Activated T-helper 1 cell treated with anti-CD3 and anti-CD28 coated beads, Interleukin-12 subunit alpha, Interleukin-12 subunit beta, Interleukin-2, Interleukin-4 antibody, amounts not matched to agents 30 ng/mL and 10 ng/mL and 1 ng/mL, durations not matched to agents 14 hours and 24 hours and 36 hours (primary cell): ENCODE measurements at regions of chr3 and their contacts with region 1.

Region 1: DNA sequence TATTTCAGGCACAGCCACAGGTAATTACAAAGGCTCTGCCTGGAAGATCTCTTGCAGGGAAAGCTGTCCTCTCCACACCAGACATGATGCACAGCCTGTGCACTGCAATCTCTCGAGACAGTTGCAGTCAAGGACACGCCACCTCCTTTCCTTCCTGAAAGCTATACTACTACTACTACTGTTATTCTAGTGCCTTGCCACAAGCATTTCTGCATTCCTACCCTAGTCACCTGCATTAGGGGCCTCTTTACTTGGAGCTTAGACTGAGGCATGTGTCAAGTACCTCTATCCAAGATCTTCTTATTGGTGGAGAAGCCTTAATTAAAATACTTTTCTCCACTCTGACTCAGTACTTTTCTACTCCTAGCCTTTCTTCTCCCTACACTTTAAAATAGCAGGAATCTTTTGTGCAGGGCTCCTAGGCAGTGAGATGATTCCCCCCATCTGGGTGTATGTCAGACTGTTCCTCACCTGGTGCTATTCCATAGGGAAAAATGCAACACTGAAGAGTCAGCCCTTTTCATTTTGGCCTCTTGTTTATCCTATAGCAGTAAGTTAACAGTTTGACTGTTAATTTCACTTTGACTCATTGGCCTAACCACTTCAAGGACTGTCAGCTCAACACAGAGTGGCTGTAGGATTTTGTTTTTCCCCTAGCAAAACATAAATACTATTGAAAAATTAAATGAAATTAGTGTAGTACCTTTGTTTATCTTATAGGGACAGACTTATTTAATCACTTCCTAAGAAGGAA is 78.9 kb downstream of the ESYT3 start:
- DNase-seq: peak; percentile 3
- H3K4me3 Mint-ChIP-seq: peak overlapping the region; percentile 37
- H3K27ac Mint-ChIP-seq: peak overlapping the region; percentile 13
- H3K4me1 Mint-ChIP-seq: peaks cover 28% of the 10 kb centered on the region
- H3K27me3 Mint-ChIP-seq: no peaks in the 10 kb centered on the region

Region 2: GRCh38 chr3:139353920-139354556 is 840.8 kb after region 1 on chr3:
- intact Hi-C with region 1: loop called (anchors 10 kb)
- DNase-seq: no peak
- H3K4me3 Mint-ChIP-seq: no peak overlapping the region
- H3K27ac Mint-ChIP-seq: no peak overlapping the region
- H3K4me1 Mint-ChIP-seq: peaks cover 9% of the 10 kb centered on the region
- H3K27me3 Mint-ChIP-seq: no peaks in the 10 kb centered on the region